ENCODE measurements at regions of chr11 and their contacts with region 1.

Region 1: DNA sequence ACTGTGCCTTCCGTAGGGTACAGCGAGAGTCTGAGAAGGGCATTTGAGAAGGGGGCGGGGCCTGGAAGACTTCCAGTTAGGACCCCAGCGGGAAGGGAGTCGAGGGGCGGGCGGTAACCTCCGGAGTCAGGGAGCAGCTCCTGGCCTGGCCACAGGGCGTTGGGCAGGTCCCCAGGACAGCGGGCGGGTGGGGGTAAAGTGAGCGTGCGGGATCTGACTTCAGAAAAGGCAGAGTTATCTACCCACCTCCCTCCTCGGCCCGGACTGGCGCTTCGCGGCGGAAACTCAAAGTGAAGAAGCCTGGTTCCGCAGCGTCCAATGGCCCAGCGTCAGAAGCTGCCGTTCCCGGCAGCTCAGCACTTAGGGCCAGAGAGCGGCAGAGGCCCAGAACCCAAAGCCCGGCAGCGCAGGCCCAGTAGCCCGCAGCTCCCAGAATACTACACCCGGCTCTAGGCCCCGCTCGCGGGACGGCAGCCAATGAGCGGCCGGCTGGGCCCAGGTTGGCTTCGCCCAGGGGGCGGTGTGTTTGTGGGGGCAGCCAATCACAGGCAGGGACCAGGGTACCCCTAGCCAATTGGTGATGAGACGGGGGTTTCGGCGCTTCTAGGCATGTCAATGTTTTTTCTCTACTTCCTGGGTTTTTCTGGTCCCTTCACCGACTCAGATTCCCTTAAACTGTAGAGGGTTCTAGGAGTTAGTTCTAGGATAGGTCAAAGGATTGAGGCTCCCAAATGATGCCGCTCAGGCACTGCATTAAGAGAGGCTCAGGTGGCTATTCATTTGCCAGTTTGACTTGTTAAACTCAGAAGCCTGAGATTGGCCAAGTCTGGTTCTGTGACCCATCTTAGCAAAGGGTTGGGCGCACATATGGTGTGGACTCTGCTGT is at the start of gene TRIM68:
- DNase-seq: peak; percentile 97
- H3K4me3 Mint-ChIP-seq: peak within 1 kb of the TSS; percentile 93
- H3K27ac Mint-ChIP-seq: peak within 1 kb of the TSS; percentile 87
- H3K4me1 Mint-ChIP-seq: peaks cover 34% of the 10 kb centered on the region
- H3K27me3 Mint-ChIP-seq: no peaks in the 10 kb centered on the region
- total RNA-seq, gene TRIM68: 8.7 to 9.2 TPM

Region 2: DNA sequence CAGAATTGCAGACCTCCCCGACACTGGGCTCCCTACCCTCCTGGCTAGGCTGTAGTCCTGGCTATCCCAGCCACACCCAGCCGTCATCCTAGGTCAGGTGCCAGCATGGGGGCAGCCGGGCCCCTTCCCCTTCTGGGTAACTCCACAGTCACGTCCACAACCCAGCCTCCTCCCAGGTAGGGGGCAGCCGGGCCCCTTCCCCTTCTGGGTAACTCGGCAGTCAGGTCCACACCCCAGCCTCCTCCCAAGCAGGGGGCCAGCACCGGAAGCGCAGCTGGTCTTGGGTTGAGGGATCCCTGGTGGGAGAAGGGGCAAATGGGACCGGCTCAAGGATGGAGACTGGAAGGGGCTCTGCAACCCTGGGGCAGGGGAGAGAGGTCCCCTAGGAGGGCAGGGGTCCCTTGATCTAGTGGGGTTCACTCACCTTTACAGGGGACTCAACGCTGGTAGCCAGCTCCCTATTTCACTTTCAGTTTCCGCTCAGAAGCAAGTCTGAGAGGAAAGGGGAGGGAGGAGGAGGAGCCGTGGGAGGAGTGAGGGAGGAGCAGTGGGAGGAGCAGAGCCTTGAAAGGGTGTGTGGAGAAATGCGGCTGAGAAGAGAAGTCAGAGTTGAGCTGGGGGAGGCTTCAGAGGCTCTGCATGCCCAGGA is 214.7 kb before region 1 on chr11 and contains the start of gene TRIM21:
- CTCF ChIA-PET with region 1: no interaction called
- POLR2A ChIA-PET with region 1: no interaction called
- intact Hi-C with region 1: loop called (anchors 2 kb)
- DNase-seq: peak; percentile 95
- H3K4me3 Mint-ChIP-seq: peak within 1 kb of the TSS; percentile 90
- H3K27ac Mint-ChIP-seq: peak within 1 kb of the TSS; percentile 91
- H3K4me1 Mint-ChIP-seq: peaks cover 32% of the 10 kb centered on the region
- H3K27me3 Mint-ChIP-seq: peaks cover 13% of the 10 kb centered on the region
- total RNA-seq, gene TRIM21: 39.2 to 40.3 TPM

Region 3: DNA sequence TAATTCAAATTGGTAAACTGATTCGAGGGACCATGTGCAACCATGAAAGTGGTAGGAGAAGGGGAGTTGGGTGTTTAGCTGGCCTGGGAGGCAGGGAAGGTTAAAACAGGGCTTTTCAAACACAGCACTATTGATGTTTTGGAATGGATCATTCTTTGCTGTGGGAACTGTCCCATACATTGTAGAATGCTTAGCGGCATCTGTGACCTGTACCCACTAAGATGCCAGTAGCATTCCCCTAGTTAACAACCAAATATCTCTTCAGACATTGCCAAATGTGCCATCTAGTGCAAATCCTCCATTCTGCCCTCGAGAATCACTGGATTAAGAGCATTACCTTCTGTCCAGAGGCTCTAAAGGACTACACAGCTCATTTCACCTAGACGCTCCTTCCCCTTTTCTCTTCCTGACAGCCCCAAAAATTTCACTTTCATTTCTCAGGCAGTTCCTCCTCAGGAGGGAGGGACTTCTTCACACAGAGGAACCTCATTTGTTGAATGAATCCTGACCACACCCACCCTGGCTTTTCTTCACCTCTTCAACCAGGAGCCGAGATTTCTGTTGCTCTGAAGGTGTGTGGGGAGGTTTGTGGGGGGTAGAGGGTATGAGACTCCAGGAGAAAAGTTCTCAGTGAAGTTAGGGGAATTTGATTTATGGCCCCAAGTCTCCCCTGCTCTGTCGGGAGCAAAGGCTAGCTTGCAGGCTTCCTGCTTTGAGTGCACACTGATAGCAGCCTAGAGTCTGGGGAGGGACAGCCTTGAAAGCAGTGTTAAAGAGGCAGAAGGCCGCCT is 1016.7 kb after region 1 on chr11 and contains the start of gene TRIM34:
- CTCF ChIA-PET with region 1: no interaction called
- POLR2A ChIA-PET with region 1: no interaction called
- intact Hi-C with region 1: loop called (anchors 10 kb)
- DNase-seq: peak; percentile 70
- H3K4me3 Mint-ChIP-seq: peak within 1 kb of the TSS; percentile 98
- H3K27ac Mint-ChIP-seq: peak within 1 kb of the TSS; percentile 92
- H3K4me1 Mint-ChIP-seq: peaks cover 36% of the 10 kb centered on the region
- H3K27me3 Mint-ChIP-seq: no peaks in the 10 kb centered on the region
- total RNA-seq, gene TRIM34: 9.6 to 11.9 TPM